Activated T-helper 2 cell treated with anti-CD3 and anti-CD28 coated beads, Interferon-gamma antibody, Interleukin-2, Interleukin-4, amounts not matched to agents 10 μg/mL and 5 μg/mL and 100 μg/mL, durations not matched to agents 14 hours and 24 hours and 36 hours (primary cell): ENCODE measurements at regions of chr6 and their contacts with region 1.

Region 1: GRCh38 chr6:131861381-131861780 is 53.6 kb downstream of the ENPP1 start:
- DNase-seq: no peak
- H3K4me3 Mint-ChIP-seq: no peak overlapping the region
- H3K27ac Mint-ChIP-seq: no peak overlapping the region
- H3K4me1 Mint-ChIP-seq: peaks cover 6% of the 10 kb centered on the region
- H3K27me3 Mint-ChIP-seq: peaks cover 2% of the 10 kb centered on the region

Region 2: GRCh38 chr6:131819572-131820124 is 41.7 kb before region 1 on chr6:
- intact Hi-C with region 1: loop called (anchors 5 kb)
- DNase-seq: no peak
- H3K4me3 Mint-ChIP-seq: no peak overlapping the region
- H3K27ac Mint-ChIP-seq: no peak overlapping the region
- H3K4me1 Mint-ChIP-seq: peaks cover 5% of the 10 kb centered on the region
- H3K27me3 Mint-ChIP-seq: peaks cover 28% of the 10 kb centered on the region